Activated B cell treated with CpG ODN at 0.5 μM for 24 hours (primary cell): ENCODE measurements at regions of chr16 and their contacts with region 1.

Region 1: GRCh38 chr16:10906914-10907756 is 30.1 kb downstream of the CIITA start:
- DNase-seq: no peak
- ATAC-seq: no peak
- H3K4me3 Mint-ChIP-seq: no peak overlapping the region
- H3K27ac Mint-ChIP-seq: peak overlapping the region; percentile 64
- H3K4me1 Mint-ChIP-seq: peaks cover 66% of the 10 kb centered on the region
- H3K27me3 Mint-ChIP-seq: no peaks in the 10 kb centered on the region
- CTCF ChIP-seq: no peak

Region 2: DNA sequence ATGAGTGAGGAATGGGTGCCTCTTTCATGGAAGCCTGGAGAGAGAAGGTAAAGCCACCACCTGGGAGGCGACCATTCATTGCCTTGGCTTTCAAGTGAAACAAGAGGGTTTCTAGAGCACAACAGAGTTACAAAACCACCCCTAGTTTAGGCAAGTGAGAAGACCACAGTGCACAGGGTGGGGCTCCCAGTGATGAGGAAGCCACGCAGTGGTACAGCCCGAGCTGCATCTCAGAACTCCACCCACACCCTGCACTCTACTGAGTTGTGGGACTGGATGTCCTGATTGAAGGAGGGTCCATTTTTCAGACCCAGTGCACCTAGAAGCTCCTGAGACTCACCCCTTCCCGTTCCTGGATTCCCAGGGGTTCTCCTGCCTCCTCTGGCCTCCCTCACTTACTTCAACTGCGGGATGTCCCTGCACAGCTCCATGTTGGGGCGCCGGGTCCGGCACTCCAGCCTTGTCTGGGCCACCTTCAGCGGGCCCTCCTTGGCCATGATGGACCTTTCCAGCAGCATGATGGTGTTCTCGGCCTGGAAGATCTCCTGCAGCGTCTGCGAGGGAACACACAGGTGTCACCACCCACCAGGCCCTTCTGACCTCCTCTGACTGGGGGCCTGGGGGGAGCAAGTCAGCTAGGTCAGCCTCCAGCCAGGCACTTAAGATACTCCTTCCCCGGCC is 271.6 kb before region 1 on chr16:
- CTCF ChIA-PET with region 1: no interaction called
- POLR2A ChIA-PET with region 1: no interaction called
- intact Hi-C with region 1: no loop called
- DNase-seq: no peak
- ATAC-seq: no peak
- H3K4me3 Mint-ChIP-seq: no peak overlapping the region
- H3K27ac Mint-ChIP-seq: no peak overlapping the region
- H3K4me1 Mint-ChIP-seq: peaks cover 2% of the 10 kb centered on the region
- H3K27me3 Mint-ChIP-seq: peaks cover 16% of the 10 kb centered on the region
- CTCF ChIP-seq: no peak

Region 3: DNA sequence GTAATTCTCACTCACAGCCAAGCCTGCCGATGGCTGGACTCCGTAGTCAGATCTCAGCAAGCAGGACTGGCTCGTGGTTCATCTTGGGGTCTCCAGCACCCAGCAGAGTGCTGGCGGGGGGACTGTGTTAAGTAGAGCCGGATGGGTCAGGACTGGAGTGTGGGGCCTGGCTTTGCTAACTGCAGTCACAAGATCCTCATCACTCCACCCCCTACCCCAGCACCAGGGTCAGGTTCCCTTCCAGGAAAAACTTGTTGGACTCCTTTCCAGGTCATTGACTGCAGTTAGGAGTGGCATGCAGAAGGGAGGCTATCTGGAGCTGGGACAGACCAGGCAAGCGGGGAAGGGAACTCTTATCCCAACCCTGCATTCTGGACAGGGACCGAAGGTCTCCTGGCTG is 24.1 kb before region 1 on chr16:
- CTCF ChIA-PET with region 1: interaction called, 3 read pairs
- POLR2A ChIA-PET with region 1: interaction called, 234 read pairs
- intact Hi-C with region 1: no loop called
- DNase-seq: no peak
- ATAC-seq: no peak
- H3K4me3 Mint-ChIP-seq: peak overlapping the region; percentile 55
- H3K27ac Mint-ChIP-seq: peak overlapping the region; percentile 87
- H3K4me1 Mint-ChIP-seq: peaks cover 81% of the 10 kb centered on the region
- H3K27me3 Mint-ChIP-seq: no peaks in the 10 kb centered on the region
- CTCF ChIP-seq: no peak

Region 4: DNA sequence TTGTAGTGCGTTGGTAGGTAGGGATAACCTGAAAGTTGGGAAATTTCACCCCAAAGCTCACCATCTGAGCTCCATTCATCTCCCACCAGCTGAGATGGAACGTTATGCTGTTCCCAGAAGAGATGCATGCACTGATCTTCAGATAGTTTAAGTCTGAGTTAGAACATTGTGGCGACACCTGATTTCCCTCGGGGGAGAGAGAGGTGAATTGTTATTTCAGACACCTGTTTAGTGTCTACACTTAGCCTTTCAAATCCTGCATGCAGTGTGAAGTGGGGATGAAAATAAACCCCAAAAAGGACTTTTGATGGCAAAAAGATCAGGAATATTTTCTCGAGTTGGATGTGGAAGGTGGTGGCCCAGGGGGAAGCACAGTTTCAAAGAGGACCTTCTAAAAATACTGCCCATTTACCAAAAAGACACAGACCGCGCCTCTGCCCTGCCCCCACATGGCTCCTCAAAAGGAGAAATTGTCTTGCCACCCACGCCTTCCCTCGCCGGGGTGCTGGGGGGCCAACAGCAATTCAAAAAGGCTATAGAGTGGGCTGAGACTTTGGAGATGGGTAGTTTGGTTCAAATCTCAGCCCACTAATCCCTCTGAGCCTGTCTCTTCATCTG is 18.7 kb before region 1 on chr16:
- CTCF ChIA-PET with region 1: interaction called, 19 read pairs
- POLR2A ChIA-PET with region 1: interaction called, 118 read pairs
- intact Hi-C with region 1: loop called (anchors 1 kb)
- DNase-seq: no peak
- ATAC-seq: peak; percentile 6
- H3K4me3 Mint-ChIP-seq: peak overlapping the region; percentile 82
- H3K27ac Mint-ChIP-seq: peak overlapping the region; percentile 87
- H3K4me1 Mint-ChIP-seq: peaks cover 99% of the 10 kb centered on the region
- H3K27me3 Mint-ChIP-seq: no peaks in the 10 kb centered on the region
- CTCF ChIP-seq: no peak

Region 5: DNA sequence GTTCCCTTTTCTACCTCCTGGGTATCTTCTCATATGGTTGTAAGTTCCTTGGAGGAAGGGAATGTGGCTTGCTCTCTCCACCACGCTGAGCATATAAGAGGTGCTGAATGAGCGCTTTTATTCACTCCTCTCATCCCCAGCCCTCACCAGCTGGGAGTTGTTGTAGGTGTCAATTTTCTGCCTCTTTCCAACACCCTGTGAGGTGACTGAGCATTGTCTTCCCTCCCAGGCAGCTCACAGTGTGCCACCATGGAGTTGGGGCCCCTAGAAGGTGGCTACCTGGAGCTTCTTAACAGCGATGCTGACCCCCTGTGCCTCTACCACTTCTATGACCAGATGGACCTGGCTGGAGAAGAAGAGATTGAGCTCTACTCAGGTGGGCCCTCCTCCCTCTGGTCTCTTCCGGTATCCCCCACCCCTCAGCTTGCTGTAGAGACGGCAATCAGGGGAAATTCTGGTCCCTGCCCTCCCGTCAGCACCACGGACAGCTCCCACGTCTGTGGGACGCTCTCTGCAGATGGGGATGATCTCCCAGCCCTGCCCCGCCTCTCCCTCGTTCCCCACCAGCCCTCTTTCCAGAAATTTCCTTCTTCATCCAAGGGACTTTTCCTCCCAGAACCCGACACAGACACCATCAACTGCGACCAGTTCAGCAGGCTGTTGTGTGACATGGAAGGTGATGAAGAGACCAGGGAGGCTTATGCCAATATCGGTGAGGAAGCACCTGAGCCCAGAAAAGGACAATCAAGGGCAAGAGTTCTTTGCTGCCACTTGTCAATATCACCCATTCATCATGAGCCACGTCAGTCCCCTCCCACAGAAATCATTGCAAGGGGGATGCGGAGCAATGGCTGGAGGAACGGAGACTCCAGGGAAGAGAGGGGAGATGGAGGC is 11.8 kb before region 1 on chr16:
- CTCF ChIA-PET with region 1: interaction called, 19 read pairs
- POLR2A ChIA-PET with region 1: interaction called, 118 read pairs
- intact Hi-C with region 1: loop called (anchors 1 kb)
- DNase-seq: peak; percentile 60
- ATAC-seq: no peak
- H3K4me3 Mint-ChIP-seq: peak overlapping the region; percentile 67
- H3K27ac Mint-ChIP-seq: peak overlapping the region; percentile 91
- H3K4me1 Mint-ChIP-seq: peaks cover 99% of the 10 kb centered on the region
- H3K27me3 Mint-ChIP-seq: no peaks in the 10 kb centered on the region
- CTCF ChIP-seq: no peak